SK-N-SH (cell line): ENCODE measurements at regions of chr17 and their contacts with region 1.

Region 1: DNA sequence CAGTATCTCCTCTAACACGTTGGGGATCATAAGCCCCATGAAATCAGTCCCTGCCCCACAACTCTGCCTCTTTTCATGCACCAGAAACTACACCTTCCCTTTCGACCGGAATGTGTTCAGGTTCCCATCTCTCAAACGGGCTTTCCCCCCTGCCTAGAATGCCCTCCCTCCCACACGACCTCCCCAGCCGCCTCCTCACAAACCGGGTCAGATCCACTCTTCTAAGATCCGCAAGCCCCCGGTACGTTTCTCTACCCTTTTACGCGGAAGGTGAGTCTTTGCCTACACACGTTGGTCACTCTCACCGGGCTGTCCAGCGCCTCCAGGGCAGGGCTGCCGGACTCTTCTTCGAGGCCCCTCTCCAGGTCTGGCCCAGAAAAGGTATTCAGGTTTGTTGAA is 708 bp downstream of the DHX33 start:
- DNase-seq: peak; percentile 36
- H3K4me3 ChIP-seq: peak overlapping the region; percentile 88 to 98
- H3K27ac ChIP-seq: peak overlapping the region; percentile 63 to 74
- H3K4me1 ChIP-seq: peaks cover 0 to 13% of the 10 kb centered on the region in 2 experiments; a peak in 2 of 4 replicates
- H3K27me3 ChIP-seq: no peaks in the 10 kb centered on the region
- CTCF ChIP-seq: no peak
- EP300 ChIP-seq: no peak
- RAD21 ChIP-seq: no peak

Region 2: GRCh38 chr17:5299383-5299782 is 168.7 kb before region 1 on chr17:
- CTCF ChIA-PET with region 1: no interaction called
- POLR2A ChIA-PET with region 1: no interaction called
- DNase-seq: no peak
- H3K4me3 ChIP-seq: no peak overlapping the region
- H3K27ac ChIP-seq: no peak overlapping the region
- H3K4me1 ChIP-seq: no peaks in the 10 kb centered on the region
- H3K27me3 ChIP-seq: no peaks in the 10 kb centered on the region
- CTCF ChIP-seq: no peak
- EP300 ChIP-seq: no peak
- RAD21 ChIP-seq: no peak

Region 3: GRCh38 chr17:5500589-5501391 is 32.7 kb after region 1 on chr17:
- CTCF ChIA-PET with region 1: no interaction called
- POLR2A ChIA-PET with region 1: interaction called, 14 read pairs
- DNase-seq: peak; percentile 99
- H3K4me3 ChIP-seq: peak overlapping the region; percentile 65 to 78
- H3K27ac ChIP-seq: peak overlapping the region; percentile 70 to 83
- H3K4me1 ChIP-seq: peaks cover 0 to 10% of the 10 kb centered on the region in 2 experiments; a peak in 2 of 4 replicates
- H3K27me3 ChIP-seq: no peaks in the 10 kb centered on the region
- CTCF ChIP-seq: no peak
- EP300 ChIP-seq: no peak
- RAD21 ChIP-seq: 0 out of 2 replicates have a peak, but pooled peaks have one; percentile 9